Heart right ventricle (tissue), 16 donors: ENCODE measurements at regions of chr3 and their contacts with region 1.

Region 1: GRCh38 chr3:98140531-98140930 is 6.7 kb upstream of the OR5H14 start:
- DNase-seq: no peak
- ATAC-seq: no peak
- H3K4me3 ChIP-seq: no peak overlapping the region
- H3K27ac ChIP-seq: no peak overlapping the region
- H3K4me1 ChIP-seq: no peaks in the 10 kb centered on the region
- H3K27me3 ChIP-seq: no peaks in the 10 kb centered on the region
- CTCF ChIP-seq: no peak

Region 2: GRCh38 chr3:98182196-98182595 is 41.7 kb after region 1 on chr3:
- intact Hi-C with region 1: loop called in 1 of 10 experiments (anchors 2 kb)
- DNase-seq: no peak
- ATAC-seq: no peak
- H3K4me3 ChIP-seq: no peak overlapping the region
- H3K27ac ChIP-seq: no peak overlapping the region
- H3K4me1 ChIP-seq: no peaks in the 10 kb centered on the region
- H3K27me3 ChIP-seq: no peaks in the 10 kb centered on the region
- CTCF ChIP-seq: no peak